Ovary (tissue), 10 donors: ENCODE measurements at regions of chr5 and their contacts with region 1.

Region 1: DNA sequence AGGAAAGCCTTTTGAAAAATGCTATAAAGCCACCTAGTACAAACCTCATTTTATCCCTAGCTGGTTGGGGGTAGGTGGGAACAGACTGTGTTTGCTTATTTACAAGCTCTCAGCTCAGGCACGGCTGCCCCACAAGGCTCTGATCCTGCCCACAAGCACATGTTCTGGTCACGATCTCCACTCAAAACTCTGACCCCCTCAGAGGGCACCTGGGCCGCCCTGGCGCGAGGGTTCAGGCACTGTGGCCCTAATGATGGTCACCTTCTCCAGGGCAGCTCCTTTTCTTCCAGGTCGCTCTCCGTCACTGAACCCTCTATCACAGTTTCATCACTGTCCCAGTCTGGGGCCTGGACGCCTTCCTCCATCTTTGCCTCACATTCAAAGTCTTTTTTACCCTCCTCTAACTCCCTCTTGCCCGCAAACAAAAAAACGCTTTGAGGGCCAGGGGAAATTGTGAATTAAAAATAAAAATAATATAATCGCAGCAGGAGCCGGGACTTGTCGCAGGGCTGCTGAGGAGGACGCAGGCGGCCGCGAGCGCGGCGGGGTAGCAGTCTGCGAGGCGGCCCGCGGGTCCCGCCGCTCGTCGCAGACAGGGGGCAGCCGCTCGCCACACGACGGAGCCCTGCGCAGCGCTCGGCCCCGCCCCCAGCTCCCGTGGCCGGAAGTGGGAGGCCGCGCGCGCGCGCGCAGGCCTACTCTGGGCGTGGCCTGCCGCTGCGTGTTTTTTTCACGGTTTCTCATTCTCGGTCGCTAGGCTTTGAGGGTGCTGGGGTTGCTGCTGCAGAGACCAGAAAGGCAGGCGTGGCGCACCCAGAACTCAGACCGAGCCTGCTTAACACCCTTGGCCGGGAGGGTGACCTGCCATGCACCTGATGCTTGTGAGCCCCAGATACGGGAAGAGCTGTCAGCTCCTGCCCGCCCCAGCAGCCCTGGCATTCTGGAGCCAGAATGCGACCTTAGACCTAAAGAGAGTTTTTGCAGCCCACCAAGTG is at the start of gene ANKRD31:
- DNase-seq: peak; percentile 81 to 92 (median 90)
- H3K4me3 ChIP-seq: peak within 1 kb of the TSS; percentile 57
- H3K27ac ChIP-seq: peak within 1 kb of the TSS in 1 of 2 donors; percentile 67
- H3K4me1 ChIP-seq: peaks cover 1% of the 10 kb centered on the region
- H3K27me3 ChIP-seq: no peaks in the 10 kb centered on the region
- CTCF ChIP-seq: peak; percentile 86 to 96 (median 89)
- EP300 ChIP-seq: no peak
- POLR2A ChIP-seq: no peak
- total RNA-seq, gene ANKRD31: 0.13 to 0.55 (median 0.38) TPM

Region 2: DNA sequence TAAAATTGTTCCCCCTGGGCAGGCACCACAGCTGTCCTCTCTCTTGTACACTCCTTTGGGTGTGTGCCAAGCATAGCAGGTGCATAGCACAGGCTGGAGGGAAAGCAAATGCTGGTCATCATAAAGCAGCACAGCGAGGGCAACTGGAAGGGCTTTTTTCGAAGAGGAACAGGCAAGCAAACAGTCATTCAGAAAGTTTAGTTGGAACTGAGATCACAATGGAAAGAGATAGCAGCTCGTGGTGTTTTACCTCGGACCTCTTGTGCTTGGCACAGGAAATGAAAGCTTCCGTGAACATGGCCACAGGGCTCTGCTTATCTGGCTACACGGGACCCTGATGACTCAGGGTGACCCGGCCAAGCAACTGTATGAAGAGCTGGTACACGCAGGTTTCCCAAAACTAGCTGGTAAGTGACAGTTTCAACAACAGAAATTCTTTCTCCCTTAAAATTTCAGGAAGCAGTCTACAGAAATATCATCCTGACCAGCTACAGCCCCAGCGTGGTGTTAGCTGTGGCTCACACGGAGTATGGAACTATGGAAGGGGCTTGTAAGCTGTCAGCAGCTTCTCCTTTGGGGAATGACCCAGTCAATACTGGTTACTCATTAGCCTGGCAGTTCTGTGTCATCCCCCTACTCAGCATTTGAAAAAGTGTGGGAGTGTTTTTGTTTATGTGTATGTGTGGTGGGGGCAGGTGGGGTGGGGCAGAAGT is 432.5 kb after region 1 on chr5:
- intact Hi-C with region 1: loop called in 1 of 4 experiments (anchors 10 kb)
- DNase-seq: peak in 1 of 5 donors; percentile 37
- H3K4me3 ChIP-seq: no peak overlapping the region
- H3K27ac ChIP-seq: no peak overlapping the region
- H3K4me1 ChIP-seq: no peaks in the 10 kb centered on the region
- H3K27me3 ChIP-seq: no peaks in the 10 kb centered on the region
- CTCF ChIP-seq: no peak
- EP300 ChIP-seq: no peak
- POLR2A ChIP-seq: no peak

Region 3: DNA sequence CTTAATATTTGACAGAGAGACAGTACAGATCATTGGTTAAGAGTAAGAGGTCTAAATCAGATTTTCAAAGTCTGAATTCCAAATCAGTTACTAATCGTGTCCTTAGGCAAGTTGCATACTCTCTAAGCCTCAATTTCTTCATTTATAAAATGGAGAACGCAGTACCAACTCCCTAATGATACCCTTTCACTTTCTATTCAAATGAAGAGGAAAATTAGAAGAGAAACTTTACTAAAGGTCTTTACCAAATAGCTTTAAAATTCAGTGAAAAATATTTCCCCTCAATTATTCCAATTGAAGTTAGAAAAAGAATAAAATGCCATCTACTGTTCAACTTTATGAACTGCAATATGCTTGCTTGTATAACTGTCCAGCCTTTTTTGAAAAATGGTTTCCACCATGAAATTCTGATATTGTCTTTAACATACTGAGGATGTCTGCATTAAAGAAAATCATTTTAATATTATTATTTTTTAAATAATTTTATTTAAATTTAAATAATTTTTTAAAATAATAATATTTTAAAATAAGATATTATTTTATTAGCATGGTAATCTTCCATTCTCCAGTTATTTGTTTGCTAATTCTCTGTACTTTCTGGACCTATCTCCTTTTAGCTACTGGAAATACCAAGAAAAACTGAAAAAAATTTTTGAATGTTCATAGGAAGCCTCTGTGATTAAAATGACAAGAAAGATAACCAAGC is 444.7 kb after region 1 on chr5:
- intact Hi-C with region 1: loop called in 2 of 4 experiments (anchors 10 kb)
- DNase-seq: no peak
- H3K4me3 ChIP-seq: no peak overlapping the region
- H3K27ac ChIP-seq: no peak overlapping the region
- H3K4me1 ChIP-seq: no peaks in the 10 kb centered on the region
- H3K27me3 ChIP-seq: peaks cover 2% of the 10 kb centered on the region
- CTCF ChIP-seq: peak; percentile 28 to 46 (median 43)
- EP300 ChIP-seq: no peak
- POLR2A ChIP-seq: no peak